Naive thymus-derived CD4-positive, alpha-beta T cell (primary cell): ENCODE measurements at regions of chr7 and their contacts with region 1.

Region 1: GRCh38 chr7:144682581-144683280 is 153.1 kb downstream of the TPK1 start:
- DNase-seq: no peak
- ATAC-seq: no peak
- H3K4me3 ChIP-seq: no peak overlapping the region
- H3K4me3 Mint-ChIP-seq: no peak overlapping the region
- H3K27ac ChIP-seq: no peak overlapping the region
- H3K27ac Mint-ChIP-seq: no peak overlapping the region
- H3K4me1 ChIP-seq: no peaks in the 10 kb centered on the region
- H3K4me1 Mint-ChIP-seq: peaks cover 0 to 4% (median 0%) of the 10 kb centered on the region in 7 donors
- H3K27me3 ChIP-seq: no peaks in the 10 kb centered on the region
- H3K27me3 Mint-ChIP-seq: no peaks in the 10 kb centered on the region

Region 2: DNA sequence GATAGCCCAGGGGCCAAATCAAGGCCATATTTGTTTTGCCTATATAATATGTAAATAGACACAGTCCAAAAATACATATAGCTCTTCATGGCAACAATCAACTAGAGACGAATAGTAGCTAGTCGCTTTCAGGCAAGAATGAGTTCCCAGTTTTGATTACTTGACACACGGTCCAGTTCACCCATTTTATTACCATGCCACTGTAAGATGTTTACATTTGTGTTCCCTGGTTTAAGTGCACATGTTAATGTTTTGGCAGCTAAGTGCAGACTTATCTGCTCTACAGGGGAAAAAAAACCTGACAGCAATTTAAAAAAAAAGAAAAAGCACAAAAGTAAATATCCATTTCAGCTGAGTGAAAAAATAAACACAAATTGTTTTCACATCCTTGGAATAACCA is 60.0 kb before region 1 on chr7:
- CTCF ChIA-PET with region 1: no interaction called
- POLR2A ChIA-PET with region 1: no interaction called
- intact Hi-C with region 1: loop called in 1 of 2 experiments (anchors 10 kb)
- DNase-seq: no peak
- ATAC-seq: no peak
- H3K4me3 ChIP-seq: no peak overlapping the region
- H3K4me3 Mint-ChIP-seq: no peak overlapping the region
- H3K27ac ChIP-seq: no peak overlapping the region
- H3K27ac Mint-ChIP-seq: no peak overlapping the region
- H3K4me1 ChIP-seq: no peaks in the 10 kb centered on the region
- H3K4me1 Mint-ChIP-seq: peaks cover 0 to 2% (median 0%) of the 10 kb centered on the region in 7 donors
- H3K27me3 ChIP-seq: no peaks in the 10 kb centered on the region
- H3K27me3 Mint-ChIP-seq: no peaks in the 10 kb centered on the region